ENCODE measurements at regions of chr17 and their contacts with region 1.

Region 1: GRCh38 chr17:18038861-18039534 is at the starts of genes ATPAF2 and GID4:
- DNase-seq: peak; percentile 99 to 100 (median 100)
- ATAC-seq: peak; percentile 91
- H3K4me3 ChIP-seq: peak within 1 kb of the TSS; percentile 93
- H3K4me3 Mint-ChIP-seq: peak within 1 kb of the TSS; percentile 100
- H3K27ac ChIP-seq: peak within 1 kb of the TSS; percentile 72 to 74
- H3K27ac Mint-ChIP-seq: peak within 1 kb of the TSS; percentile 91
- H3K4me1 ChIP-seq: peaks cover 34% of the 10 kb centered on the region
- H3K4me1 Mint-ChIP-seq: peaks cover 54% of the 10 kb centered on the region
- H3K27me3 ChIP-seq: no peaks in the 10 kb centered on the region
- H3K27me3 Mint-ChIP-seq: no peaks in the 10 kb centered on the region
- CTCF ChIP-seq: no peak
- total RNA-seq, gene ATPAF2: 20.8 to 21.9 TPM
- total RNA-seq, gene GID4: 3.4 to 3.7 TPM

Region 2: GRCh38 chr17:17041571-17042380 is 997.2 kb before region 1 on chr17:
- CTCF ChIA-PET with region 1: no interaction called
- POLR2A ChIA-PET with region 1: no interaction called
- intact Hi-C with region 1: loop called in 1 of 2 experiments (anchors 2 kb)
- DNase-seq: peak; percentile 92 to 98 (median 97)
- ATAC-seq: peak; percentile 98
- H3K4me3 ChIP-seq: peak overlapping the region; percentile 59
- H3K4me3 Mint-ChIP-seq: peak overlapping the region; percentile 81
- H3K27ac ChIP-seq: no peak overlapping the region
- H3K27ac Mint-ChIP-seq: peak overlapping the region; percentile 70
- H3K4me1 ChIP-seq: peaks cover 40% of the 10 kb centered on the region
- H3K4me1 Mint-ChIP-seq: peaks cover 48% of the 10 kb centered on the region
- H3K27me3 ChIP-seq: no peaks in the 10 kb centered on the region
- H3K27me3 Mint-ChIP-seq: no peaks in the 10 kb centered on the region
- CTCF ChIP-seq: no peak

Region 3: GRCh38 chr17:17476865-17477467 is 562.0 kb before region 1 on chr17 and contains the start of gene MED9:
- CTCF ChIA-PET with region 1: no interaction called
- POLR2A ChIA-PET with region 1: no interaction called
- intact Hi-C with region 1: loop called in 1 of 2 experiments (anchors 5 kb)
- DNase-seq: peak; percentile 92 to 98 (median 94)
- ATAC-seq: peak; percentile 98
- H3K4me3 ChIP-seq: peak within 1 kb of the TSS; percentile 82
- H3K4me3 Mint-ChIP-seq: peak within 1 kb of the TSS; percentile 91
- H3K27ac ChIP-seq: peak within 1 kb of the TSS; percentile 42 to 58
- H3K27ac Mint-ChIP-seq: peak within 1 kb of the TSS; percentile 87
- H3K4me1 ChIP-seq: peaks cover 42% of the 10 kb centered on the region
- H3K4me1 Mint-ChIP-seq: peaks cover 51% of the 10 kb centered on the region
- H3K27me3 ChIP-seq: peaks cover 0 to 2% of the 10 kb centered on the region in 2 experiments
- H3K27me3 Mint-ChIP-seq: peaks cover 6% of the 10 kb centered on the region
- CTCF ChIP-seq: no peak
- total RNA-seq, gene MED9: 27.0 to 27.9 TPM

Region 4: GRCh38 chr17:17752089-17752820 is 286.7 kb before region 1 on chr17:
- CTCF ChIA-PET with region 1: no interaction called
- POLR2A ChIA-PET with region 1: no interaction called
- intact Hi-C with region 1: loop called in 1 of 2 experiments (anchors 10 kb)
- DNase-seq: peak; percentile 94 to 98 (median 97)
- ATAC-seq: peak; percentile 82
- H3K4me3 ChIP-seq: peak overlapping the region; percentile 87
- H3K4me3 Mint-ChIP-seq: peak overlapping the region; percentile 67
- H3K27ac ChIP-seq: peak overlapping the region; percentile 89 to 90
- H3K27ac Mint-ChIP-seq: peak overlapping the region; percentile 95
- H3K4me1 ChIP-seq: peaks cover 83% of the 10 kb centered on the region
- H3K4me1 Mint-ChIP-seq: peaks cover 81% of the 10 kb centered on the region
- H3K27me3 ChIP-seq: no peaks in the 10 kb centered on the region
- H3K27me3 Mint-ChIP-seq: no peaks in the 10 kb centered on the region
- CTCF ChIP-seq: peak; percentile 58

Region 5: GRCh38 chr17:17823433-17824118 is 215.4 kb before region 1 on chr17:
- CTCF ChIA-PET with region 1: no interaction called
- POLR2A ChIA-PET with region 1: no interaction called
- intact Hi-C with region 1: loop called in 1 of 2 experiments (anchors 1 kb)
- DNase-seq: peak; percentile 46 to 93 (median 78)
- ATAC-seq: peak; percentile 83
- H3K4me3 ChIP-seq: peak overlapping the region; percentile 53
- H3K4me3 Mint-ChIP-seq: peak overlapping the region; percentile 85
- H3K27ac ChIP-seq: peak overlapping the region; percentile 87 to 88
- H3K27ac Mint-ChIP-seq: peak overlapping the region; percentile 98
- H3K4me1 ChIP-seq: peaks cover 96% of the 10 kb centered on the region
- H3K4me1 Mint-ChIP-seq: peaks cover 83% of the 10 kb centered on the region
- H3K27me3 ChIP-seq: no peaks in the 10 kb centered on the region
- H3K27me3 Mint-ChIP-seq: no peaks in the 10 kb centered on the region
- CTCF ChIP-seq: no peak

Region 6: GRCh38 chr17:18087610-18088491 is 48.9 kb after region 1 on chr17 and contains the start of gene DRG2:
- CTCF ChIA-PET with region 1: interaction called, 5 read pairs
- POLR2A ChIA-PET with region 1: no interaction called
- intact Hi-C with region 1: loop called in 1 of 2 experiments (anchors 2 kb)
- DNase-seq: peak; percentile 79 to 94 (median 84)
- ATAC-seq: peak; percentile 92
- H3K4me3 ChIP-seq: peak within 1 kb of the TSS; percentile 79
- H3K4me3 Mint-ChIP-seq: peak within 1 kb of the TSS; percentile 100
- H3K27ac ChIP-seq: peak within 1 kb of the TSS; percentile 80
- H3K27ac Mint-ChIP-seq: peak within 1 kb of the TSS; percentile 97
- H3K4me1 ChIP-seq: peaks cover 27% of the 10 kb centered on the region
- H3K4me1 Mint-ChIP-seq: peaks cover 32% of the 10 kb centered on the region
- H3K27me3 ChIP-seq: no peaks in the 10 kb centered on the region
- H3K27me3 Mint-ChIP-seq: no peaks in the 10 kb centered on the region
- CTCF ChIP-seq: no peak
- total RNA-seq, gene DRG2: 38.9 to 40.6 TPM

Region 7: GRCh38 chr17:18166894-18167293 is 127.9 kb after region 1 on chr17:
- CTCF ChIA-PET with region 1: no interaction called
- POLR2A ChIA-PET with region 1: no interaction called
- intact Hi-C with region 1: no loop called
- DNase-seq: no peak
- ATAC-seq: no peak
- H3K4me3 ChIP-seq: no peak overlapping the region
- H3K4me3 Mint-ChIP-seq: no peak overlapping the region
- H3K27ac ChIP-seq: no peak overlapping the region
- H3K27ac Mint-ChIP-seq: no peak overlapping the region
- H3K4me1 ChIP-seq: no peaks in the 10 kb centered on the region
- H3K4me1 Mint-ChIP-seq: no peaks in the 10 kb centered on the region
- H3K27me3 ChIP-seq: no peaks in the 10 kb centered on the region
- H3K27me3 Mint-ChIP-seq: no peaks in the 10 kb centered on the region
- CTCF ChIP-seq: no peak